ENCODE measurements at regions of chr2 and their contacts with region 1.

Region 1: GRCh38 chr2:64119369-64119768 is 24.9 kb downstream of the PELI1 start:
- DNase-seq: no peak
- H3K4me3 Mint-ChIP-seq: no peak overlapping the region
- H3K27ac Mint-ChIP-seq: peak overlapping the region; percentile 51
- H3K4me1 Mint-ChIP-seq: peaks cover 29% of the 10 kb centered on the region
- H3K27me3 Mint-ChIP-seq: no peaks in the 10 kb centered on the region
- CTCF ChIP-seq: no peak

Region 2: GRCh38 chr2:64108666-64109241 is 10.6 kb before region 1 on chr2:
- CTCF ChIA-PET with region 1: interaction called, 3 read pairs
- POLR2A ChIA-PET with region 1: interaction called, 18 read pairs
- intact Hi-C with region 1: no loop called
- DNase-seq: no peak
- H3K4me3 Mint-ChIP-seq: no peak overlapping the region
- H3K27ac Mint-ChIP-seq: no peak overlapping the region
- H3K4me1 Mint-ChIP-seq: peaks cover 23% of the 10 kb centered on the region
- H3K27me3 Mint-ChIP-seq: no peaks in the 10 kb centered on the region
- CTCF ChIP-seq: no peak

Region 3: DNA sequence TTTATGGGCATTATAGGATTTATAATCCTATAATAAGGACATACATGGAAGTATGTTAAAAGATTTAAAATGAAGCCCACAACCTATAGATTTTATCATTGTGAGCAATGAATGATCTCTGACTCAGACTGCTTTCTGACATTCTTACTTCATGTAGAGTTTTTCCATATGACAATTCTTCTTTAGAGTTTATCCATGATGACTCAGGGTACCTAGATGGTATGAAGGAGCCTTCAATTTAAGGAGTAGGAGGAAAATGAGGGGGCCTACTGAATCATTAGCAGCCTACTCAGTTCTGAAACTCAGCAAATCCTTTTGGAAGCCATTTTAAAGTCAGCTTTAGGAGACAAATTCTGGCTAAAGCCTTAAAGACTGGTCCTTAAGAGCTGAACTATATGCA is 14.5 kb after region 1 on chr2:
- CTCF ChIA-PET with region 1: interaction called, 6 read pairs
- POLR2A ChIA-PET with region 1: interaction called, 36 read pairs
- intact Hi-C with region 1: no loop called
- DNase-seq: peak; percentile 44
- H3K4me3 Mint-ChIP-seq: no peak overlapping the region
- H3K27ac Mint-ChIP-seq: peak overlapping the region; percentile 29
- H3K4me1 Mint-ChIP-seq: peaks cover 61% of the 10 kb centered on the region
- H3K27me3 Mint-ChIP-seq: no peaks in the 10 kb centered on the region
- CTCF ChIP-seq: no peak